CD8-positive, alpha-beta T cell (primary cell): ENCODE measurements at regions of chr12 and their contacts with region 1.

Region 1: GRCh38 chr12:68364893-68365725 is 32.9 kb upstream of the MDM1 start:
- DNase-seq: peak; percentile 67 to 97 (median 86)
- ATAC-seq: peak; percentile 91
- H3K4me3 ChIP-seq: peak overlapping the region; percentile 32 to 54
- H3K4me3 Mint-ChIP-seq: peak overlapping the region; percentile 81
- H3K27ac ChIP-seq: peak overlapping the region; percentile 74 to 85
- H3K27ac Mint-ChIP-seq: peak overlapping the region; percentile 95
- H3K4me1 ChIP-seq: peaks cover 52% of the 10 kb centered on the region
- H3K4me1 Mint-ChIP-seq: peaks cover 73% of the 10 kb centered on the region
- H3K27me3 ChIP-seq: no peaks in the 10 kb centered on the region
- H3K27me3 Mint-ChIP-seq: no peaks in the 10 kb centered on the region
- CTCF ChIP-seq: no peak

Region 2: DNA sequence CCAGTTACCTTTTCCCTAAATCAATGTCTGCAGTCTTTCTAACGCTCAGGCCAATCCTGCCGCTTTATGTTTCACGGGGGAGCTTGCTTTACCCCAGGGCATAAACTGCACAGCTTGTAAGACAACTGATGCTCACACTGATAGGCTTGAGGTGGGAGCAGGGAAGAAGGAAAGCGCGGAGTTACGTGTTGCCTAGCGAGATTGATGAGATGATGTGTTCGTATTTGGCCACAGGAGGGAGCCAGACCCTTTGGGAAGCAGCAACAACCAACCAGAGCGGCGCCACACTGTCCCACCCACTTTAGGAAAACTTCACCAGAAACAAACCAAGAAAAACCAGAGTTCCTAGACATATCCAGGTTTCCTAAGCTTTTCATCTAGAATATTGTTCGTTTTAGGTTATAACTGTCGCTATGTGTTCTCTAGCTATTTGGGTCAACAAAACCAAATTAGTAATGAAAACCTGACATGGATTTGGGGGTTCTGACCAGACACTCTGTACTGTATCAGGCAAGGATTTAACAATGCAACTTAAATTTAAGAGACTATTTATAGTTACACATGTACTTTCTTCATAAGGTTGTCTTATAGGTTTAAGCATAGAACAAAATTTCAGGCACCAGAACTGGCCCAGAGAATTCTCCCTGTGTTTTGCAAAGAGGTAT is 141.9 kb before region 1 on chr12:
- CTCF ChIA-PET with region 1: no interaction called
- POLR2A ChIA-PET with region 1: no interaction called
- intact Hi-C with region 1: no loop called
- DNase-seq: peak; percentile 43 to 90 (median 68)
- ATAC-seq: peak; percentile 92
- H3K4me3 ChIP-seq: no peak overlapping the region
- H3K4me3 Mint-ChIP-seq: peak overlapping the region; percentile 65
- H3K27ac ChIP-seq: no peak overlapping the region
- H3K27ac Mint-ChIP-seq: peak overlapping the region; percentile 45
- H3K4me1 ChIP-seq: peaks cover 7% of the 10 kb centered on the region
- H3K4me1 Mint-ChIP-seq: peaks cover 7% of the 10 kb centered on the region
- H3K27me3 ChIP-seq: no peaks in the 10 kb centered on the region
- H3K27me3 Mint-ChIP-seq: no peaks in the 10 kb centered on the region
- CTCF ChIP-seq: peak; percentile 83

Region 3: DNA sequence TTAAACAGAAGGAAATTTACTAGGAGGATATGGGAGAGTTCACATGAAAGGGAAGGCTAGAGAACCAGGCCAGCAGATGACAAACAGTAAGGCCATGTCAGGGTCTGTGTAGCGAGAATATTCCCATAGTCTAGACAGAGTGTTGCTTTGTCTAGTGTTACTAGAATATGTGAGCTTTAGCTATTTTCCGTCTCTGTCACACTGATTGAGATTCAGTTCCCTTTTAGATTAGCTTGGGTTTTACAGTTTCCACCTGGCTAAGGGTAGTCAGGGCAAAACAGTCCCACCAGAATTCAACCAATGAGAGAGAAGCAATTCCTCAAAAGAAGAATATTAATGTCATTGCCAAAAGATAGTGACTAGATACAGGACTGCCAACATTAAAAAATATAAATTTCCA is 49.9 kb after region 1 on chr12:
- CTCF ChIA-PET with region 1: no interaction called
- POLR2A ChIA-PET with region 1: no interaction called
- intact Hi-C with region 1: loop called in 1 of 2 experiments (anchors 2 kb)
- DNase-seq: no peak
- ATAC-seq: no peak
- H3K4me3 ChIP-seq: no peak overlapping the region
- H3K4me3 Mint-ChIP-seq: no peak overlapping the region
- H3K27ac ChIP-seq: no peak overlapping the region
- H3K27ac Mint-ChIP-seq: no peak overlapping the region
- H3K4me1 ChIP-seq: no peaks in the 10 kb centered on the region
- H3K4me1 Mint-ChIP-seq: peaks cover 11% of the 10 kb centered on the region
- H3K27me3 ChIP-seq: no peaks in the 10 kb centered on the region
- H3K27me3 Mint-ChIP-seq: no peaks in the 10 kb centered on the region
- CTCF ChIP-seq: no peak

Region 4: DNA sequence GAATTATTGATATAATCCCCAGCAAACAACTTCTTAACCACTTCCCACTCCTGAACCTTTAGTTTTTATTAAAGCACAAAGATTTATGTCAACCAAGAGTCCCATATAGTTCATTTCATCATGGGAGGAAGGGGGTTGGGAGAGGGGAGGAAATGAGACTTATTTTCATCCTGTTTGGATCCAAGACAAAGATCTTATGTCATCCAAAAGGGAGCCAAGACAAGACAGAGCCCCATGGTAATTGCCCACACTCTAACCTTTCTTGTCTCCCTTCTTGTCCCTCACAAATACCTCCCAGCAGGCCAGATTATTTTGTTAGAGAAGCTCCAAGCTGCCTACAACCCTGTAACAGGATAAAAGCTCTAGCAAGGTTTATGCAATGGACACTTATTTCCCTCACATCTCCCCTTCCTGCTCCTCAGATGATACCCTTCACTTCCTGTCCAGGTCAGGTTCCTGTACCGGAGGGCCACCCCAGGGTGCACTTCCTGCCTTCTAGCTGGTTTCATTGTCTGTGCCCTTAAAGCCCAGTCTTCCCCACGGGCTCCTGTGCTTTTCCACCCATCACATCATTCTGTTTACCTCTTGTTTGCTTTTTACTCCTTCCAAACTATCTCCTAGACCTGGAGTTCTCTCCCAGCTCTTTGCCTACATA is 90.7 kb after region 1 on chr12:
- CTCF ChIA-PET with region 1: no interaction called
- POLR2A ChIA-PET with region 1: no interaction called
- intact Hi-C with region 1: loop called in 1 of 2 experiments (anchors 5 kb)
- DNase-seq: peak in 5 of 9 experiments; percentile 7 to 57 (median 30)
- ATAC-seq: no peak
- H3K4me3 ChIP-seq: no peak overlapping the region
- H3K4me3 Mint-ChIP-seq: peak overlapping the region; percentile 20
- H3K27ac ChIP-seq: peak overlapping the region in 1 of 2 experiments; percentile 59
- H3K27ac Mint-ChIP-seq: peak overlapping the region; percentile 53
- H3K4me1 ChIP-seq: peaks cover 54% of the 10 kb centered on the region
- H3K4me1 Mint-ChIP-seq: peaks cover 70% of the 10 kb centered on the region
- H3K27me3 ChIP-seq: no peaks in the 10 kb centered on the region
- H3K27me3 Mint-ChIP-seq: no peaks in the 10 kb centered on the region
- CTCF ChIP-seq: no peak

Region 5: GRCh38 chr12:68538726-68539614 is 173.9 kb after region 1 on chr12:
- CTCF ChIA-PET with region 1: no interaction called
- POLR2A ChIA-PET with region 1: interaction called, 12 read pairs
- intact Hi-C with region 1: loop called in 1 of 2 experiments (anchors 2 kb)
- DNase-seq: peak; percentile 34 to 93 (median 66)
- ATAC-seq: peak; percentile 93
- H3K4me3 ChIP-seq: peak overlapping the region in 1 of 2 experiments; percentile 1
- H3K4me3 Mint-ChIP-seq: peak overlapping the region; percentile 67
- H3K27ac ChIP-seq: peak overlapping the region; percentile 9 to 37
- H3K27ac Mint-ChIP-seq: peak overlapping the region; percentile 91
- H3K4me1 ChIP-seq: peaks cover 39% of the 10 kb centered on the region
- H3K4me1 Mint-ChIP-seq: peaks cover 57% of the 10 kb centered on the region
- H3K27me3 ChIP-seq: no peaks in the 10 kb centered on the region
- H3K27me3 Mint-ChIP-seq: no peaks in the 10 kb centered on the region
- CTCF ChIP-seq: no peak

Region 6: DNA sequence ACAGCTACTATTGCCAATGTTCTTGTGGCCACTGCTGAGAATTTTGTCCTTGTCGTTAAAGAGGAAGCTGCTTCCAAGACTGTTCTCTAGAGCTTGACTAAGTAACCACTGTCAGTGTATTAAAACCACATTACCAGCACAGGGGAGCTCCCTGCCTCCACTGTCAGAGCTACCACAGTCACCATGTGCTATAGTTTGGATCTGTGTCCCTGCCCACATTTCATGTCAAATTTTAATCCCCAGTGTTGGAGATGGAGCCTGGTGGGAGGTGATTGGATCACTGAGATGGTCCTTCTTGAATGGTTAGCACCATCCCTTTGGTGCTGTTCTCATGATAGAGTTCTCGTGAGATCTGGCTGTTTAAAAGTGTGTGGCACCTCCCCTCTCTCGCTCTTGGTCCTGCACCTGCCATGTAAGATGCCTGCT is 222.4 kb after region 1 on chr12:
- CTCF ChIA-PET with region 1: interaction called, 3 read pairs
- POLR2A ChIA-PET with region 1: interaction called, 4 read pairs
- intact Hi-C with region 1: loop called in 1 of 2 experiments (anchors 1 kb)
- DNase-seq: peak in 7 of 9 experiments; percentile 11 to 75 (median 56)
- ATAC-seq: peak; percentile 71
- H3K4me3 ChIP-seq: no peak overlapping the region
- H3K4me3 Mint-ChIP-seq: peak overlapping the region; percentile 56
- H3K27ac ChIP-seq: peak overlapping the region in 1 of 2 experiments; percentile 44
- H3K27ac Mint-ChIP-seq: peak overlapping the region; percentile 87
- H3K4me1 ChIP-seq: peaks cover 66% of the 10 kb centered on the region
- H3K4me1 Mint-ChIP-seq: peaks cover 62% of the 10 kb centered on the region
- H3K27me3 ChIP-seq: no peaks in the 10 kb centered on the region
- H3K27me3 Mint-ChIP-seq: no peaks in the 10 kb centered on the region
- CTCF ChIP-seq: no peak

Region 7: GRCh38 chr12:68745904-68746571 is 380.9 kb after region 1 on chr12 and contains the start of gene SLC35E3:
- CTCF ChIA-PET with region 1: no interaction called
- POLR2A ChIA-PET with region 1: no interaction called
- intact Hi-C with region 1: loop called in 1 of 2 experiments (anchors 2 kb)
- DNase-seq: peak; percentile 83 to 95 (median 90)
- ATAC-seq: peak; percentile 96
- H3K4me3 ChIP-seq: peak within 1 kb of the TSS; percentile 80 to 96
- H3K4me3 Mint-ChIP-seq: peak within 1 kb of the TSS; percentile 98
- H3K27ac ChIP-seq: peak within 1 kb of the TSS; percentile 73 to 76
- H3K27ac Mint-ChIP-seq: peak within 1 kb of the TSS; percentile 97
- H3K4me1 ChIP-seq: peaks cover 21% of the 10 kb centered on the region
- H3K4me1 Mint-ChIP-seq: peaks cover 48% of the 10 kb centered on the region
- H3K27me3 ChIP-seq: no peaks in the 10 kb centered on the region
- H3K27me3 Mint-ChIP-seq: no peaks in the 10 kb centered on the region
- CTCF ChIP-seq: no peak
- total RNA-seq, gene SLC35E3: 4.0 to 5.7 TPM